Heart left ventricle (tissue), 16 donors: ENCODE measurements at regions of chr3 and their contacts with region 1.

Region 1: DNA sequence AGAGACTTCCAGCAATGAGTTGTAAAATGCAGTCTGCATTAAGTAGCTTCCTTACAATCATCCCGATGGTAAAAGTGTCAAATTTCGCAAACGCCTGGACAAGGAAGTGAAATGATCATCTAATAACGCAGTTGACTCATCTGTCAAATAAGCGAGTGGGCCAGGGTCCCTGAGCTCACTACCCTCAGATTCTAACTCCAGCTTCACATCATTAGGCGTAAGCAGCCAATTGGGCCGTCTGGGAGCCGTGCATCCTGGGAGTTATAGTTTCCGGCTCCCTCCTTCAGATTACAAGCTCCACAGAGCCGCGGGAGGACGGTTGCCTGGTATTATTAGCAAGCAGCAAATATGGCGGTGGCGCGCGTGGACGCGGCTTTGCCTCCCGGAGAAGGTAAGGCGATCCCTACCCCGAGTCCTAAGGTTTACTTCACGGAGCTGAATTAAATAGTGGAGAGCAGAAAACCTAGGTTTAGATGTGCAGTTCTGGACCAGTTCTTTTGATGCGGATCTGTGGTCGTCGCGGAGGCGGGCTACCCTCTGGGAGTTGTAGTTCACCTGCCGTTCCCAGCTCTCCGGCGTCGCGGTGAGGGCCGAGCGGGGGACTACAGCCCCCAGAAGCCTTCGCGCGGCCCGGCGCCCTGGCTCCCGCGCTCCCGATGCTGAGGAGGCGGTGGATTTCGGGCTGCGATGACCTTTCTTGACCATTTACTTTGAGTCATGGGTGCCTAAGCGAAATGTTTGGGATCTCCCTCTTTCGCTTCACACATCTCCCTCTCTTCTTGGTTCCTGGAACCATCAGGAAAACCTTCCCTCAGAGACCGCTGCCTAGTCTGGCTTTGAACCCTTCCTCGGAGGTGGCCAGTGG is at the start of gene CEP97:
- DNase-seq: peak; percentile 90 to 95 (median 93)
- ATAC-seq: peak; percentile 100
- H3K4me3 ChIP-seq: peak within 1 kb of the TSS; percentile 54 to 94 (median 70)
- H3K27ac ChIP-seq: peak within 1 kb of the TSS; percentile 24 to 84 (median 76)
- H3K4me1 ChIP-seq: peaks cover 0 to 45% (median 9%) of the 10 kb centered on the region in 12 donors
- H3K27me3 ChIP-seq: no peaks in the 10 kb centered on the region
- CTCF ChIP-seq: no peak
- POLR2A ChIP-seq: peak in 1 of 2 donors; percentile 29
- total RNA-seq, gene CEP97: 5.1 to 12.3 (median 6.9) TPM

Region 2: DNA sequence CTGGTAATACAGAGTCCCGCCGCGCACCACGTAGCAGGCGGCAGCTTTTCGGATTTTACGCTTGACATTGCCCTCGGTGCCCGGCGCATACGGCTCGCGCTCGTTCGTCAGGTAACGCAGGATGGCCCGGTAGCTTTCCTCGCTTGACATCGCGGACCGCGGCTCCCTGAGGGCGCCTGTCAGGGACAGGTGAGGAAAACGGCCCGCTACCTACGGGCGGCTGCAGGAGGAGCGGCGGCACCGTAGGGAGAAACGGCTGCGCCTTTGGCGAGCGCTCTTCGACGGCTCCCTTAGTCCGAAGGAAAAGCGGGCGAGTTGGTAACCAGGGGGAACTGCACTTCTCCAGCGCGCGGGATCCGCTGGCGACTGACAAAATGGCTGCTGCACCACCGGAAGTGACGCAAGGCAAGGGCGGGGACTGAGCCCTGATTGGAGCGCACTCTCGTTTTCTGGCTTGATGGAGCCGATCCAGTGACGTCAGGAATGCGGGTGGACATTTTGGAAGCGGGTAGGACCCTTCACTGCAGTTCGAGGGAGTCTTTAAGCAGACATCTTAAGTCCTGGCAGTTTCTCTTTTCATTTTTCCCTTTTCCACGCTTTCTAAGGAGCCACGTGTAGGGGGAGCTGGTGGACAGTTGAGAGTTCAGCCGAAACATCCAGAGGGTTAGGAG is 47.7 kb before region 1 on chr3 and contains the start of gene ZBTB11:
- intact Hi-C with region 1: loop called in 2 of 10 experiments (anchors 1 to 5 kb)
- DNase-seq: peak; percentile 100
- ATAC-seq: peak; percentile 91 to 96 (median 94)
- H3K4me3 ChIP-seq: peak within 1 kb of the TSS; percentile 76 to 100 (median 90)
- H3K27ac ChIP-seq: peak within 1 kb of the TSS; percentile 88 to 100 (median 96)
- H3K4me1 ChIP-seq: peaks cover 0 to 39% (median 12%) of the 10 kb centered on the region in 12 donors
- H3K27me3 ChIP-seq: no peaks in the 10 kb centered on the region
- CTCF ChIP-seq: peak; percentile 24 to 79 (median 42)
- POLR2A ChIP-seq: peak; percentile 42 to 73
- total RNA-seq, gene ZBTB11: 8.6 to 12.9 (median 10.4) TPM

Region 3: DNA sequence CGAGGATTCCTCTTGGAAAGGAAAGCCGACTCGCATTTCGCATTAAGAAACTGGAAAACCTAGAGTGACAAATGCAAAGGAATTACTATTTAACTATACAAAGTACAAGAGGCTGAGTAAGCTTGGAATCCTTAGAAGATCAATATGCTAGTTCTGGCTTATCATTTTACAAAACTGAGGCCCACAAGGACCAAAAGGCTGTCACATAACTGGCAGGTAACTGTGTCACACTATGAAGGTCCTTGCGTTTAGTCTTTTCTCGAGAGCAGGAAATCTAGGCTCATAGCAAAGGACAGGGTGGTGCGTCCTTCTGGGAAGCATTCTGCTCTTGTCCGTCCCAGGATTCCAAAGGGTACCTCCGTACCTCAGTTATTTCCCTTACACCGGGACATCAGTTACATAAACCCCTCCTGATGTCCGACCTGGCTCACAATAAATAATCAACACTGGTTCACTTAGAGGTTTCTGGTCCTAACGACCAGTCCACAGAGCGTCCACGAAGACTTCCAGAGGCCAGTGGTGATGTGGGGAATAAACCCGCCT is 38.6 kb before region 1 on chr3:
- intact Hi-C with region 1: loop called in 2 of 10 experiments (anchors 5 kb)
- DNase-seq: no peak
- ATAC-seq: peak; percentile 13 to 37 (median 20)
- H3K4me3 ChIP-seq: peak overlapping the region; percentile 51 to 93 (median 76)
- H3K27ac ChIP-seq: peak overlapping the region; percentile 66 to 97 (median 88)
- H3K4me1 ChIP-seq: peaks cover 4 to 63% (median 27%) of the 10 kb centered on the region in 12 donors
- H3K27me3 ChIP-seq: no peaks in the 10 kb centered on the region
- CTCF ChIP-seq: no peak
- POLR2A ChIP-seq: no peak

Region 4: DNA sequence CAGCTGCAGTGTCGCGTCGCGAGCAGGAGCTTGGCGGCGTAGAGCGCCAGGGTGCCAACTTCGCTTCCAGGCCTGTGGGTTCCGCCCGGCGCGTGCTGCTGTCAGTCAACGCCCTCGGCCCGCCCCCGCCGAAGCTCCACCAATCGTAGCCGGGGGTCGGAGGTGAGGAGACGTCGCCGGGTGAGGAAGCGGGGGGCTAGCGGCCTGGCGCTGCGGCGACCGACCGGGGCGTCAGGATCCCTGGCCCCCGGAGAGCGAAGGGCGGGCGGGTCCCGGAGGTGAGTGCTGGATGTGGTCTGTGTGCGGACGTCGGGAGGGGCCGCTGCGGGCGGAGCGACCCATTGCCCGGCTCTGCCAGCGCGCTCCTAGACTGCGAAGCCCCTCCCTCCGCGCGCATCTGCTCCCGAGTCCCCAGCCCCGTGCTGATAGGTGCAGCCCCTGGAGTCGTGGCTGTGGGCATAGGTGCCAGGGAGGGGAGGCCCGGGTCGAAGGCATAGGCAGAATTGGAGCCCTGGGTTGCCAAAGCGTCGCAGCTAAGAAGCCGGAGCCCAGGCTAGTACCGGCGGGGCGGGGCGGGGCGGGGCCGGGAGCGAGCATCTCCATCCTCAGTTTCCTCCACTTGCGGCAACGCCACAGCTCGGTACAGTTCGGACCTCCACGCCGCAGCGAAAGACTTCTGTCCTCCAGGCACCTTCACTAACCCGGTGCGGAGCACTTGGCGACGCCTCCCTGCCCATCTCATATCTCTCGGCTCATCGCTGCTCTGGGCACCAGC is 54.7 kb after region 1 on chr3 and contains the start of gene NXPE3:
- intact Hi-C with region 1: loop called in 4 of 10 experiments (anchors 2 to 5 kb)
- DNase-seq: peak; percentile 92 to 96 (median 93)
- ATAC-seq: peak; percentile 87 to 98 (median 96)
- H3K4me3 ChIP-seq: peak within 1 kb of the TSS; percentile 71 to 97 (median 88)
- H3K27ac ChIP-seq: peak within 1 kb of the TSS; percentile 68 to 95 (median 89)
- H3K4me1 ChIP-seq: peaks cover 0 to 31% (median 19%) of the 10 kb centered on the region in 12 donors
- H3K27me3 ChIP-seq: no peaks in the 10 kb centered on the region
- CTCF ChIP-seq: peak in 1 of 12 donors; percentile 7
- POLR2A ChIP-seq: peak in 1 of 2 donors; percentile 70
- total RNA-seq, gene NXPE3: 24.0 to 43.8 (median 36.4) TPM